ENCODE measurements at regions of chr12 and their contacts with region 1.

Region 1: GRCh38 chr12:56127888-56128669 is at the start of gene ESYT1:
- DNase-seq: peak; percentile 86 to 100 (median 98)
- ATAC-seq: peak; percentile 83 to 90
- H3K4me3 Mint-ChIP-seq: peak within 1 kb of the TSS; percentile 97 to 100 (median 99)
- H3K27ac Mint-ChIP-seq: peak within 1 kb of the TSS; percentile 90 to 99 (median 96)
- H3K4me1 Mint-ChIP-seq: peaks cover 32 to 78% (median 60%) of the 10 kb centered on the region in 4 donors
- H3K27me3 Mint-ChIP-seq: no peaks in the 10 kb centered on the region
- polyA plus RNA-seq, gene ESYT1: 354 to 433 (median 357) TPM

Region 2: GRCh38 chr12:55908726-55909512 is 219.2 kb before region 1 on chr12:
- POLR2A ChIA-PET with region 1: no interaction called
- DNase-seq: no peak
- ATAC-seq: no peak
- H3K4me3 Mint-ChIP-seq: no peak overlapping the region
- H3K27ac Mint-ChIP-seq: peak overlapping the region in 8 of 10 donors; percentile 13 to 76 (median 40)
- H3K4me1 Mint-ChIP-seq: peaks cover 9 to 22% (median 11%) of the 10 kb centered on the region in 4 donors
- H3K27me3 Mint-ChIP-seq: no peaks in the 10 kb centered on the region

Region 3: GRCh38 chr12:56143870-56144269 is 15.8 kb after region 1 on chr12:
- POLR2A ChIA-PET with region 1: interaction called, 146 read pairs
- DNase-seq: no peak
- ATAC-seq: no peak
- H3K4me3 Mint-ChIP-seq: no peak overlapping the region
- H3K27ac Mint-ChIP-seq: peak overlapping the region; percentile 16 to 91 (median 86)
- H3K4me1 Mint-ChIP-seq: peaks cover 16 to 56% (median 49%) of the 10 kb centered on the region in 4 donors
- H3K27me3 Mint-ChIP-seq: no peaks in the 10 kb centered on the region

Region 4: GRCh38 chr12:56152318-56153033 is 24.4 kb after region 1 on chr12 and contains the start of gene MYL6B:
- POLR2A ChIA-PET with region 1: interaction called, 163 read pairs
- DNase-seq: peak; percentile 85 to 94 (median 87)
- ATAC-seq: peak; percentile 89 to 91
- H3K4me3 Mint-ChIP-seq: peak within 1 kb of the TSS; percentile 81 to 95 (median 92)
- H3K27ac Mint-ChIP-seq: peak within 1 kb of the TSS; percentile 93 to 99 (median 98)
- H3K4me1 Mint-ChIP-seq: peaks cover 17 to 47% (median 40%) of the 10 kb centered on the region in 4 donors
- H3K27me3 Mint-ChIP-seq: no peaks in the 10 kb centered on the region
- polyA plus RNA-seq, gene MYL6B: 3.4 to 4.0 (median 3.8) TPM

Region 5: GRCh38 chr12:56158029-56158925 is 30.2 kb after region 1 on chr12 and contains the start of gene MYL6:
- POLR2A ChIA-PET with region 1: interaction called, 163 read pairs
- DNase-seq: peak; percentile 72 to 97 (median 90)
- ATAC-seq: peak; percentile 85 to 87
- H3K4me3 Mint-ChIP-seq: peak within 1 kb of the TSS; percentile 93 to 99 (median 98)
- H3K27ac Mint-ChIP-seq: peak within 1 kb of the TSS; percentile 95 to 100 (median 98)
- H3K4me1 Mint-ChIP-seq: peaks cover 32 to 54% (median 49%) of the 10 kb centered on the region in 4 donors
- H3K27me3 Mint-ChIP-seq: no peaks in the 10 kb centered on the region
- polyA plus RNA-seq, gene MYL6: 1,813 to 2,533 (median 2,044) TPM